ENCODE measurements at regions of chr16 and their contacts with region 1.

Region 1: DNA sequence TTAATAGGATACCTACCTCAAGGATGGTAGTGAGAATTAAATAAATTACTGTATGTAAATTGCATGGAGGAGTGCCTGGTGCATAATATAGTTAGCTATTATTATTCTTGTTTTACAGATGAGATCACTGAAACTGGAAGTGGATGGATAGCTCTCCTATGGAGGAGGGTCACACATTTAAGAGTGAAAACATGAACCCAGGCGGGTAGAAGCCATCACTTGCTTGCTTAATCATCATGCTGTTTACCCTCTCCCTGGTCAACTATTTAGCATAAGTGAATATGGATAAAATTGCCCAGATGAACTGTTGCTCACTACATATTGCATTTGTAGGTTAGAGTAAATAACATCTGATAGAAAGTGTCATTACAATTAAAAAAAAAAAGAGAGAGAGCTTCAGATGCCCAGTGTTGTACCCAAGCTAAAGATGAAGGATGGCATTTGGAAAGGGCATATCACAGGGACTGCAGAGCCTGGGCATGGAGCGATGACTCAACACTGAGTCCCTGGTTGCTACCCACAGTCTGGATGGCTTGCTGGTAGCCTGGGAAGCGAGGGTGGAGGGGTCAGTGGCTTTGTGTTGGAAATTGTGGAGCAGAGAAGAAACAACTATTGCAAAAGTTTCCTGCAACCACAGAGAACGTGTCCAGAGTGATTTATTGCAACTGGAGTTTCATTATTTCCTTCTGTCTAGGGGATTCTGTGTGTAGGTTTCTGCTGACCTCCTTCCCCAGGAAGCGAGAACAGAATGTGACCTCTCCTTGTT is 414.4 kb downstream of the SHISA9 start:
- DNase-seq: no peak
- ATAC-seq: no peak
- H3K4me3 ChIP-seq: no peak overlapping the region
- H3K27ac ChIP-seq: no peak overlapping the region
- H3K4me1 ChIP-seq: no peaks in the 10 kb centered on the region
- H3K27me3 ChIP-seq: peaks cover 0 to 6% (median 0%) of the 10 kb centered on the region in 7 donors
- CTCF ChIP-seq: no peak

Region 2: GRCh38 chr16:13067648-13068047 is 248.2 kb before region 1 on chr16:
- intact Hi-C with region 1: loop called in 1 of 10 experiments (anchors 5 kb)
- DNase-seq: no peak
- ATAC-seq: no peak
- H3K4me3 ChIP-seq: no peak overlapping the region
- H3K27ac ChIP-seq: no peak overlapping the region
- H3K4me1 ChIP-seq: no peaks in the 10 kb centered on the region
- H3K27me3 ChIP-seq: peaks cover 0 to 20% (median 0%) of the 10 kb centered on the region in 7 donors
- CTCF ChIP-seq: no peak

Region 3: GRCh38 chr16:13254998-13255614 is 60.7 kb before region 1 on chr16:
- intact Hi-C with region 1: loop called in 1 of 10 experiments (anchors 10 kb)
- DNase-seq: no peak
- ATAC-seq: no peak
- H3K4me3 ChIP-seq: no peak overlapping the region
- H3K27ac ChIP-seq: no peak overlapping the region
- H3K4me1 ChIP-seq: no peaks in the 10 kb centered on the region
- H3K27me3 ChIP-seq: peaks cover 0 to 6% (median 0%) of the 10 kb centered on the region in 7 donors
- CTCF ChIP-seq: no peak

Measured in heart right ventricle (tissue), 16 donors.